HEK293 (cell line): ENCODE measurements at regions of chr9 and their contacts with region 1.

Region 1: GRCh38 chr9:75027187-75028107 is 646 bp downstream of the CARNMT1 start:
- H3K4me3 ChIP-seq: peak overlapping the region; percentile 79
- H3K27ac ChIP-seq: peak overlapping the region; percentile 93
- H3K4me1 ChIP-seq: 0 out of 2 replicates have a peak, but pooled peaks cover 3% of the 10 kb centered on the region
- CTCF ChIP-seq: no peak

Region 2: DNA sequence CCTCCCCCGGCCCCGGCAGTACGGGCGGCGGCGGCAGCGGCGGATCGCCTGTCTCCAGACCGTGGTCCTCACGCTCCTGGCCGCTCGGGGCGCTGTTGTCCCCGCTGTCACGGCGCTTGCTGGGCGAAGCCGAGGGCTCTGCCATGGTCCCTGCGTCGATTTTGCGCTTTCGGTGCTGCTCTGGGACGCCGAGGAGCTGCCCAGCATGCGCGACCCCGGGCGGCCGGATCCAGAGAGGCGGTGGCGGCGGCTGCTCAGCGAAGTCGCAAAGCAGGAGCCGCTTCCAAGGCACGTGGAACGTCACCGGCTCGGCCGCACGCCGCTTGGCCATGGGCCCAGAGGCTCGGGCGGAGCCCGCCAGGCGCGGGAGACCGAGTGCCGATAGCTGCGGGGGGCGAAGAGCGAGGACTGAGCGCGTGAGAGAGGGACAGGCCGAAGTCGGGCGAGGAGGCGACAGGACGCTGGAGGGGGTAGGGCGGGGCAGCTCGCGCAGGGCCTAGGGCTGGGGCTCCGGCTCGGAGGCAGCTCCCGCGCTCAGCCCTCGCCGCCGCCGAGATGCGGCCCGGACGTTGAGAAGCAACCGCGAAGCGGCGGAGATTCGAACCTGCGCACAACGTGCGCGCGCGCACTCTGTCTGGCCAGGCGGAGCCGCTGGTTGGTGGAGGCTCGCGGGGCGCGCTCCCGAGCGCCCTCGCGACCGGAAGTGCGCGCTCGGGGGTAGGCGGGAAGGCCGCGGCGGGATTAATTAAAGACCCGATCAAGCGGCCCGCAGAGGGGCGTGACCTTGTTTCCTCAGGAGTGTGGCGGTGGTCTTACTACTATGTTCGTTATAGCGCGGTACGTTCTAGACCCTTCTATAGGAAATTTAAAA is 74.9 kb before region 1 on chr9 and contains the start of gene C9orf40:
- CTCF ChIA-PET with region 1: interaction called, 7 read pairs
- POLR2A ChIA-PET with region 1: interaction called, 25 read pairs
- H3K4me3 ChIP-seq: peak within 1 kb of the TSS; percentile 94
- H3K27ac ChIP-seq: peak within 1 kb of the TSS; percentile 98
- H3K4me1 ChIP-seq: 0 out of 2 replicates have a peak, but pooled peaks cover 3% of the 10 kb centered on the region
- CTCF ChIP-seq: peak; percentile 86

Region 3: GRCh38 chr9:75010570-75010969 is 16.9 kb before region 1 on chr9:
- CTCF ChIA-PET with region 1: interaction called, 5 read pairs
- POLR2A ChIA-PET with region 1: interaction called, 23 read pairs
- H3K4me3 ChIP-seq: no peak overlapping the region
- H3K27ac ChIP-seq: no peak overlapping the region
- H3K4me1 ChIP-seq: no peaks in the 10 kb centered on the region
- CTCF ChIP-seq: no peak

Region 4: DNA sequence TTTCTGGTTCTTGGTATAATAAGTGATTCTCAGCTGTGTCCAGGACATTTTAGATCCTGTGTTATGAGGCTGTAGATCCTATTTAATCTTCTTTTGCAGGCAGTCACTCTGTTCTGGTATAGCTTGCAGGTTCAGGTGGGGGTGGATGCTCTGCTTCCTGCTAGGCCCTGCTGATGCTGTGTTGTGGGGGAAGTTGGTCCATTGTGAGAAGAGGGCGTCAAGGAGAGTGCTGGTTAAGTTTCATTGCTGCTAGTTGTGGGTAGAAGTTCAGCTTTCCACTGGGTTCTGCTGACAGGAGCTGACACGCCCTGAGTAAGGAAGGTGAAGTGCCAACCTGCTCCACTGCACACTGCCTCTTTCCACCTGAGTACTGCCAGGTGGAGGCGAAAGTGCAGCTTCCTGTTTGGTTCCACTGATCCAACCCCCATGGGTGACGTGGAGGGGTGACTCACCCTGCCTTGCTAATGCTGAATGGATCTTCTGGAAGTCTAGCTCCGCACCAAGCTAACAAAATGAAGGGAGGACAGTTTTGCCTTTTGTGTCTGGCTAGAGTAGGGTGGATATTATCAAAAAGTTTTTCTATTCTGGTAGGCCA is 44.2 kb after region 1 on chr9:
- CTCF ChIA-PET with region 1: interaction called, 11 read pairs
- POLR2A ChIA-PET with region 1: no interaction called
- H3K4me3 ChIP-seq: no peak overlapping the region
- H3K27ac ChIP-seq: no peak overlapping the region
- H3K4me1 ChIP-seq: no peaks in the 10 kb centered on the region
- CTCF ChIP-seq: no peak

Region 5: GRCh38 chr9:75083188-75083970 is 55.9 kb after region 1 on chr9:
- CTCF ChIA-PET with region 1: interaction called, 16 read pairs
- POLR2A ChIA-PET with region 1: interaction called, 24 read pairs
- H3K4me3 ChIP-seq: no peak overlapping the region
- H3K27ac ChIP-seq: no peak overlapping the region
- H3K4me1 ChIP-seq: 0 out of 2 replicates have a peak, but pooled peaks cover 7% of the 10 kb centered on the region
- CTCF ChIP-seq: no peak

Region 6: DNA sequence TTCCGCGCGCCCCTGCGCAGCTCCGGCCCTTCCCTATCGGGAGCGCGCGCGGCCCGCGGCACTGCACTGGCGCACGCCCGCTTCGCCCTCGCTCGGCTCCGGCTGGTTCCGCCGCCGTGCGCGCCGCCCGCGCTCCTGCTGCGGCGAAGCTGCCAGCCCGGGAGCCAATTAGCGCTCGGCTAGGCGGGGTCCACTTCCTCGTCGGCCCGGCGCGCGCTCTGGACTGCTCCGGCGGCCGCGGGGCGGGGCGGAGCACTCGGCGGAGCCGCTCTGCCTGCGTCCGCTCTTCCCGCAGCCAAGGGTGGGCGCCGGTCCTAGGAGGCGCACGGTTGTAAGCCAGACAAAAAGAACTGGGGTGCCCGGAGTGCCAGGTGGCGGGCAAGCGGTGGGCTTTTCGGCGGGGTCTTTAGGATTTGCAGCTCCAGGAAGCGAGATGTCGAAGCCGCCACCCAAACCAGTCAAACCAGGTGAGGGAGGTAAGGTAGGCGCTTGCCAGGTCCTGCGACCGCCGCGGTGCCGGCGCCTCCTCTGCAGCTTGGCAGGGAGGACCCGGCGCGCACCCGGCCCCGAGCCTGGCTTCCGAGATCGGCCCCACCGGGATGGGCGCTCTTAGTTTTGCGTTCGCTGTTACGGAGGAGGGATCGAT is 60.9 kb after region 1 on chr9 and contains the start of gene OSTF1:
- CTCF ChIA-PET with region 1: interaction called, 16 read pairs
- POLR2A ChIA-PET with region 1: interaction called, 24 read pairs
- H3K4me3 ChIP-seq: peak within 1 kb of the TSS; percentile 97
- H3K27ac ChIP-seq: peak within 1 kb of the TSS; percentile 60; the same call in 1 of the 2 replicates
- H3K4me1 ChIP-seq: 0 out of 2 replicates have a peak, but pooled peaks cover 5% of the 10 kb centered on the region
- CTCF ChIP-seq: no peak